BJ (cell line): ENCODE measurements at regions of chr7 and their contacts with region 1.

Region 1: DNA sequence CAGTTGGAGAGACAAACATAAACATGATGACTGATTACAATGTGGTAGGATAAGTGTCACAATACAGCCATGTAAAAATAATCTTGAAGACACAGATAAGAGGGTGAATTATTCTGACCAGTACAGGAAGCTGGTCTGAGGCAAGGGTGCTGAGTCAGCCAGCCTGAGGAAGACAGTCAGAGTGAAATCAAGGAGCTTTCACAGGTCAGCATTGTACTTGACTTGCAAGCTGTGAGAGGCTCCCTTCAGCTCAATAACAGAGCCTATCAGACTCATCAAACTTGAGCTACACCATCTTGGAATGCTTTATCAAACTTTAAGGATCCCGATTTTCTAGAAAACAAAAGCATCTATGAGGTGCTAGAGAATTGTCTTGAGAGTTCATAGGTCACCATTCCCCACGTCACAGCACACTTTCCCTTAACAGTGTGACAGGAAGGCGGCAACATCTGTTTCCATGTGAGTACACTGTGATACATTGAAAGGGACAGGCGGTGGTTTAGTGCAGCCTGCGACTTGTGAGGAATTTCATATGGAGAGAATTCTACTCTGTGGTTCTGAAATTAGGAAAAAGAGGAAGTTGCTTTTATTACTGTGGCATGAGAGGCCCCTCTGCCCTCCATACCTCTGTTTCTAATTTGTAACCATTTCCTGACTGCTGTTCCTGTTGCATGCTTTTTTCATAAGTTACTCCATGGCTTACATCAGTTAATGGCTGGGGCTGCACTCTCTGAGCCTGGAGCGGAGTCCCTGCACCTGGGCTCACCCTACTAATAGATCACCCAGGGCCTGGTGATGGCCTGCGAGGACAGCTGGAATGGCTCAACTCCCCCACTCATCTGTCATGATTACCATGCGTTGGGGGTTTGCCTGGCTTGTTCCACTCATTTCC is 417.1 kb downstream of the SUGCT start:
- DNase-seq: peak; percentile 62
- H3K4me3 ChIP-seq: no peak overlapping the region
- H3K27me3 ChIP-seq: no peaks in the 10 kb centered on the region
- CTCF ChIP-seq: no peak

Region 2: DNA sequence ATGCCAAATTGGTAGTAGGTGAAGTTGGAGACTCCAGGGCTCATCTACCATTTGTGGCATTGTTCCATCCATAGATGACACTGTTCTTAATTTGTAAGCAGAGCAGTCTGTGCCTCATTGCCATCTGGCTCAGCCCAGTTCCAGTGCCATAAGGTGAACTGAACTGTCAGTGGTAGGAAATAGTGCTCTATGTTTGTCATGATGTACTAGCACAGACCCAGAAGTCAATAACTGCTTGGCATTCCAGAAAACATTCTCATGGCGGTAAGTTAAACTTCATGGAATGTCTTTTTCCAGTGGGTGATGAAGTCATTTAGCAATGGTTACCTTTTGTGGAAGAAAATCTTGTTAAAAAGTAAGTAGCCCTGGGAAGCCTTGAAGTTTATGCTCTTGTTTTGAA is 114.4 kb before region 1 on chr7:
- CTCF ChIA-PET with region 1: no interaction called
- POLR2A ChIA-PET with region 1: no interaction called
- DNase-seq: peak; percentile 98
- H3K4me3 ChIP-seq: no peak overlapping the region
- H3K27me3 ChIP-seq: no peaks in the 10 kb centered on the region
- CTCF ChIP-seq: no peak

Region 3: GRCh38 chr7:40808378-40808942 is 256.5 kb after region 1 on chr7:
- CTCF ChIA-PET with region 1: no interaction called
- POLR2A ChIA-PET with region 1: interaction called, 17 read pairs
- DNase-seq: peak; percentile 98
- H3K4me3 ChIP-seq: no peak overlapping the region
- H3K27me3 ChIP-seq: no peaks in the 10 kb centered on the region
- CTCF ChIP-seq: no peak

Region 4: GRCh38 chr7:41425926-41426325 is 874.0 kb after region 1 on chr7:
- CTCF ChIA-PET with region 1: no interaction called
- POLR2A ChIA-PET with region 1: no interaction called
- DNase-seq: no peak
- H3K4me3 ChIP-seq: no peak overlapping the region
- H3K27me3 ChIP-seq: no peaks in the 10 kb centered on the region
- CTCF ChIP-seq: no peak